ENCODE measurements at regions of chr14 and their contacts with region 1.

Region 1: DNA sequence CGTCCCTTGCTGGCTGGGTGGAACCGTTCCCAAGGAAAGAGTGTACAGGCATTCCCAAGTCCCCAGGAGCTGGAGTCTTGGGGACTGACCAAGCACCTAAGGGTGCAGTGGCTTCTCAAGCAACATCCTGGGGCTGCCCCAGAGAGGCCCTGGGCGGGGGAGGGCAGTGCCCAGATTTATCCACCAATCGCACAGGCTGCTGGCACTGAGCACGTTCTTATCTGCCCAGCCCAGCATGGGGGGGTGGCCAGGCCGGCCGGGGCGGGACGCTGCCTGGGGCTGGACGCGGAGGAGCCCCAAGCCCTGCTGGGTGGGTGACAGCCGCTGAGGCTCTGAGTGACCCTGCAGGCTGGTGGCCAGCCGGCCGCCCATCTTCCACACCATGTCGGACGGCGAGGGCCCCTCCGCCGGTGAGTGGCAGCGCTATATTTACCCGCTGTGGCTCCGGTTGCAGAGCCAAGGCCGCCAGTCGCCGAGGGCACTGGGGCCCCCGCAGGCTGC is 53.4 kb downstream of the CYP46A1 start:
- DNase-seq: no peak

Region 2: DNA sequence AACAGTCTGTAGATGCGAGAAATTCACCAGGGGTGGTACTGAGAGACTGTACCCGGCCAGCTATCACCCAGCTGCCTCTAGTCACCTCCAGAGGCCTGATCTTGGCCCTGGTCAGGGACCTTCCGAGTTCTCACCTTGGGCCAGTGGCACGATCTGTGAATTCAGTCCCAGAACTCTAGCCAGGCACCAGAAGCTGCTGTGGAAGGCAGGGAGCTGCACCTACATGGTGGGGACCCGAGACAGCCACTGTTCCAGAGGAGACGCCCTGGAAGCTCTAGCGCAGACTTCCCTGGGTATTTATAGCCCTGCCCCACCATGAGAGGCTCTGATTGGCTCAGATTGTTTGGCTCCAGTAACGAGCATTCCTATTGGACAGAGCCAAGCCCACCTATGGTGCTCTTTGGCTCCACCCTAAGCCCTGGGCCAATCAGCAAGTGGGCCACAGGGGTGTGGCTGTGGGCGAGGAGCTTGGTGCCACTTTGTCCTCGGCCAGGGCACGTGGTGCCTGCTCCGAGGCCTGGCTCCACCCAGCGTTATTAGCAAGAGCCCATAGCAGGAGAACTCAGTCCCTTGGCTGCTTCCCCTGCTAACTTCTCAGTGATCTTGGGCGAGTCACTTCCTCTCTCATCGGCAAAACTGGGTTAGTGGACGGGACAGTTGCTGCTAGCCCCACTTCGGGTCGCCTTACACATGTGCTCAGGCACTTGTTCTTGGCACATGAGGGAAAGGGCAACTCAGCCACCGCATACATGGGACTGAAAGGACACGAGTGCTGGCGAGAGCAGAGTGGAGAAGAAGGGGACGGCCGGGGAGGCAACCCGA is 376.5 kb before region 1 on chr14:
- CTCF ChIA-PET with region 1: no interaction called
- POLR2A ChIA-PET with region 1: no interaction called
- DNase-seq: peak; percentile 25

Region 3: GRCh38 chr14:99706107-99706900 is 31.2 kb before region 1 on chr14:
- CTCF ChIA-PET with region 1: no interaction called
- POLR2A ChIA-PET with region 1: no interaction called
- DNase-seq: no peak

Region 4: GRCh38 chr14:99899578-99900178 is 162.2 kb after region 1 on chr14:
- CTCF ChIA-PET with region 1: interaction called, 11 read pairs
- POLR2A ChIA-PET with region 1: no interaction called
- DNase-seq: no peak

Measured in HEK293T (cell line).